MCF 10A (cell line): ENCODE measurements at regions of chr14 and their contacts with region 1.

Region 1: GRCh38 chr14:99755629-99756603 is 37.3 kb upstream of the EML1 start:
- DNase-seq: peak; percentile 86
- H3K4me3 Mint-ChIP-seq: no peak overlapping the region
- H3K27ac Mint-ChIP-seq: peak overlapping the region; percentile 57
- H3K4me1 Mint-ChIP-seq: peaks cover 28% of the 10 kb centered on the region
- H3K27me3 Mint-ChIP-seq: no peaks in the 10 kb centered on the region
- CTCF ChIP-seq: no peak

Region 2: GRCh38 chr14:98704441-98704840 is 1051.5 kb before region 1 on chr14:
- CTCF ChIA-PET with region 1: no interaction called
- POLR2A ChIA-PET with region 1: no interaction called
- intact Hi-C with region 1: no loop called
- DNase-seq: no peak
- H3K4me3 Mint-ChIP-seq: no peak overlapping the region
- H3K27ac Mint-ChIP-seq: no peak overlapping the region
- H3K4me1 Mint-ChIP-seq: no peaks in the 10 kb centered on the region
- H3K27me3 Mint-ChIP-seq: no peaks in the 10 kb centered on the region
- CTCF ChIP-seq: no peak

Region 3: DNA sequence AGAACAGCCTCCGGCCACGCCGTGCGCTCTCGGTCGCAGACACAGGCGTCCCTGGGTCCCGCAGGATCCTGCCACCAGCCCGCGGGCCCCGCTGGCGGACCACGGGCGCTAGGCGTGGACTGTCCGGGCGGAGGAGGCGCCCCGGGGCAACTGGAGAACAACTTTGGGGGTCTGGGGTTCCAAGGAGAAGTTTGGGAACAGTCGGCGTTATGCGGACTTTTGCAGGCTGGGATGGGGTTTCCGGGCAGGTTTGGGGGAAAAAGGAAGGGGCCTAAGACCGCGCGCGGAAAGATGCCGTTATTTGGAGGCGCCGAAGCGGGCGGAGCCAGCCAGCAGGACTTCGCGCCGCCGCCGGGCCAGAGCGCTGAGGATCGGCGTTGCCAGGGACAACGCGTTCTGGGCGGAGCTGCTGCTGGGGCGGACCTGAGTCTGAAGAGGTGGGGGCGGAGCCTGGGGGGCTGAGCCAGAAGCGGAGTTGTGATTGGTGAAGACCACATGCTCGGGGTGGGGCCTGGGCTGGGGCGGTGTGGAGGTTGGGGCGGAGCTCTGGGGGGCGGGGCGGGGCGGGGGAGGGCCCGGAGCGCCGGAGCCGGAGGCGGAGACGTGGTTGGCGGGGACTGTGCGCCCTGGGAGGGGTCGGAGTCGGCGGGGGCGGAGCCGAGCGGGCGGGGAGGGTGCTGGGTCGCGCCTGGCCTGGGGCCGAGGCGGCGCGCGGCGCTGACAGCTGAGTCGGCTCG is 72.1 kb before region 1 on chr14 and contains the start of gene CYP46A1:
- CTCF ChIA-PET with region 1: interaction called, 3 read pairs
- POLR2A ChIA-PET with region 1: interaction called, 3 read pairs
- intact Hi-C with region 1: loop called (anchors 1 kb)
- DNase-seq: peak; percentile 98
- H3K4me3 Mint-ChIP-seq: peak within 1 kb of the TSS; percentile 78
- H3K27ac Mint-ChIP-seq: no peak within 1 kb of the TSS
- H3K4me1 Mint-ChIP-seq: peaks cover 6% of the 10 kb centered on the region
- H3K27me3 Mint-ChIP-seq: peaks cover 28% of the 10 kb centered on the region
- CTCF ChIP-seq: no peak
- total RNA-seq, gene CYP46A1: 0.20 and 0.30 TPM in 2 replicates

Region 4: DNA sequence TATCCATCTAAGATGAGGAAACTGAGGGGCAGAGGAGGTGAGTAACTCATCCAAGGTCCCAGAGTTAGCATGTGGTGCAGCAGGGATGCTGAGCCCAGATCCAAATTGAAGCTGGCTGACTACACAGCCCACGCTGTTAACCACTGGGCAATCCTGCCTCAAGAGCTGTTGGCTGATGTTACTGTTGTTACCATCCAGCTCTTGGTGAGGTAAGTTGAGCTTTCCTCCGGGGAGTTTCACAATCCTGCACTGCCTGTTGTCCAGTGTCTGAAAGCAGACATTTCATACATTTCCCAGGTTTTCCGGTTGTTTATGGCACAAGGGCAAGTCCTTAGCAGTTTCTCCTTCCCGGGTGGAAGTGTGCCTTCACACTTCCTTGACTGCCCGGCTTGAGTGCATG is 57.3 kb before region 1 on chr14:
- CTCF ChIA-PET with region 1: no interaction called
- POLR2A ChIA-PET with region 1: no interaction called
- intact Hi-C with region 1: no loop called
- DNase-seq: no peak
- H3K4me3 Mint-ChIP-seq: no peak overlapping the region
- H3K27ac Mint-ChIP-seq: no peak overlapping the region
- H3K4me1 Mint-ChIP-seq: no peaks in the 10 kb centered on the region
- H3K27me3 Mint-ChIP-seq: peaks cover 42% of the 10 kb centered on the region
- CTCF ChIP-seq: no peak

Region 5: DNA sequence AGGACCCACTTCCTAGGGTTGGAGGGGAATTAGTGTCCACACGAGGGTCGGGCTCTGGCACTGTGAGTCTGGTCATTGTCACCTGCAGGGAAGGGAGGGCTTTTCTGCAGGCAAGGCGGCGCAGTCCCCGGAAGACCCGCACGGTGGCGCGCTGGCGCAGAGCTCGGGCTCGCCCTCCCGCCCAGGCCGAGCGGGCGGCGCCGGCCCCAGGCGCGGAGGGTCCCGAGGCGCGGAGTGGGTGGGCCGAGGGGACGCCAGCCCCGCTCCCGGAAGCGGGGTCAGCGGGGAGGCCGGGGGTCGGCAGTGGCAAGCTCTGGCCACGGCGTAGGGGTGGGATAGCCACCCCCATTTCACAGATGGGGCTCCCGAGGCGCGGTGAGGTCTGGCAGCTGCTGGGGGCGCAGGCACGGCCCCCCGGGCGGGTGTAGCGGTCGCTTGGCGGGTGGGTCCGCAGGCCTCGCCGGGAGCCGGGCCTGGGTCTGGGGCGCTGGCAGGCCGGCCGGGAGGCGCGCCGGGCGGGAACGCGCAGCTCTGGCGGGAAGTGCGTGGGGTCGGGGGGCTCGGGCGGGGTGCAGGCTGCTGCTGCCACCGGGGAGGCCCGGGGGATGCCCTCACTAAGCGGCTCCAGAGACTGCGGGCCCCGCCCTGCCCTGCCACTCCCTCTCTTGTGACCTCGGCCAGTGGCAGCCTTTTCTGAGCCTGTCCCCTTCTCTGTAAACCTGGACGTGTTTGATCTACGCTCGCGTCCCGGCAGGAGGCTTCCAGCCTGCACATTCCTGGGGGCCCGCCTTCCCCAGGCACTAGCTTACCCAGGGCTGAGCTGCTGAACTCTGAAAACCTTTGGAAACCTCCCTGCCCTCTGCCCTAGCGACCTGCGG is 25.7 kb before region 1 on chr14:
- CTCF ChIA-PET with region 1: interaction called, 11 read pairs
- POLR2A ChIA-PET with region 1: no interaction called
- intact Hi-C with region 1: no loop called
- DNase-seq: peak; percentile 34
- H3K4me3 Mint-ChIP-seq: no peak overlapping the region
- H3K27ac Mint-ChIP-seq: no peak overlapping the region
- H3K4me1 Mint-ChIP-seq: no peaks in the 10 kb centered on the region
- H3K27me3 Mint-ChIP-seq: no peaks in the 10 kb centered on the region
- CTCF ChIP-seq: peak; percentile 90